Cardiac septum (tissue), 1 donor: ENCODE measurements at regions of chr3 and their contacts with region 1.

Region 1: GRCh38 chr3:184371570-184372018 is 6.4 kb downstream of the THPO start:
- DNase-seq: no peak

Region 2: GRCh38 chr3:184417619-184418327 is 46.2 kb after region 1 on chr3:
- intact Hi-C with region 1: loop called (anchors 5 kb)
- DNase-seq: peak; percentile 76

Region 3: GRCh38 chr3:184469423-184469822 is 97.8 kb after region 1 on chr3:
- intact Hi-C with region 1: loop called (anchors 5 kb)
- DNase-seq: peak; percentile 72

Region 4: DNA sequence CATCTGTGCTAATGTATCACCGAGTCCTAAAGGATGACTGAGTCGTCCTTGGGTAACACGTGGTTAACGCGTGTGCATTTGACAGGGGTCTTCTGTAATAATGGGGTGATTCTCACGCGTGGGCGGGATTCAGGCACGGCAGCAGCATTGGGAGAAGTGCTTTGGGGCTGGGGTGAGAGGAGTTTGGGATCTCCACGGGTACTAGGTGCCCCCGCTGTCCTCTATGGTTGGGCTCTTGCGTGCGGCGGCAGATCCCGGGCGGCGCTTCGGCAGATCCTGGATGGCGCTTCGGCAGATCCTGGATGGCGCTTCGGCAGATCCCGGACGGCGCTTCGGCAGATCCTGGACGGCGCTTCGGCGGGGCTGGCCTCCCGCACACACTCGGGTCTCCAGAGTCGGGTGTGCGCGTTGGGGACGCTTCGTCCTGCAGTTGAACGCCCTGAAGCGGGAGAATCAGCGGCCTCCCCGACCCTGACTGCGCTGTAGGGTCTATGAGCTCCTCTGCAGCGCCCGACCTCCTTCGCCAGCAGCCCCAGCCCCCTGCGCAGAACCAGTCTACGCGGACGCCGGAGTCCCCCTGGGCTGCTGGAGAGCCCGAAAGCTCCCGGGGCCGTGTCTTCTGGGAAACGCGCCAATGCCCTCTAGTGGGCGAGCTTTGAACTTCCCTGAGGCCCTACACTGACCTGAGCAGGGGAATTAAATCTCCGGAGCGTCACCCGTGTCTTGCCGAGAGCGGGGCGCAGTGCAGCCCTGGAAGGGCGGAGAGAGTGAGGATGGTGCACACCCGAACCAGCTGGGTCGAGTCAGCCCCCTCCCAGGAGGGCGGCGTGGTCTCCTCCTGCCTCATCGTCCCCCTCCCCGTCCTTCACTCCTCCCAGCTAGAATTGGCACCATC is 141.9 kb after region 1 on chr3:
- intact Hi-C with region 1: loop called (anchors 2 kb)
- DNase-seq: peak; percentile 90

Region 5: DNA sequence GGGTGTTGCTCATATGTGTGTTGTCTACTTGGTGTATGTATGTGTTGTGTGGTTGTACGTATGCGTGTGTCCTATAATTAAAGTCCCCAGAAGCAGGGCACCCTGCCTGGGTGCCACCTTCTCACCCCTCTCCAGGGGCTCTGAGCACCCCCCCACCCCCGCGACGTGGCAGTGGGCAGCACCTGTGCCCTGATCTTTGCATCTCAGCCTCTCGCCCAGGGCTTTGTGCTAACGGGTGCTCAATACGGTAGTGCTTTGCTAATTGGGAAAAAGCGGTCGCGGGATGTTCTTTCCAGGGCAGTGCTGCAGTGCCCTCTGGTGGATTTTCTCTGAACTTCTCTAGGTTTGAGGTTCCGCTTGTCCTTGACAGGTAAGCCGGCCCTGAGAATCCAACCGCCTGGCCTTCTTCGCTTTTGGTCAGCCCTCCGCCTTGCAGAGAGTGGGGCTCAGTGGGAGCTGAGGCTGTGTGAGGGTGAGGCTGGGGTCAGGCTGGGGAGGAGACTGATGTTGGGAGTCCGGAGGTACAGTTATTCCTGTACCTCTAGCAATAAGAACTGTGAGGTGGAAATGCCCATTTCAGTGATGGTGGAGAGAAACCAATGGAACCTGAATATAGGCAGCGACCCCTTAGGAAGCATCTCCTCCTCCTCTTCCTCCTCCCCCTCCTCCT is 172.4 kb after region 1 on chr3:
- intact Hi-C with region 1: loop called (anchors 1 kb)
- DNase-seq: peak; percentile 79

Region 6: DNA sequence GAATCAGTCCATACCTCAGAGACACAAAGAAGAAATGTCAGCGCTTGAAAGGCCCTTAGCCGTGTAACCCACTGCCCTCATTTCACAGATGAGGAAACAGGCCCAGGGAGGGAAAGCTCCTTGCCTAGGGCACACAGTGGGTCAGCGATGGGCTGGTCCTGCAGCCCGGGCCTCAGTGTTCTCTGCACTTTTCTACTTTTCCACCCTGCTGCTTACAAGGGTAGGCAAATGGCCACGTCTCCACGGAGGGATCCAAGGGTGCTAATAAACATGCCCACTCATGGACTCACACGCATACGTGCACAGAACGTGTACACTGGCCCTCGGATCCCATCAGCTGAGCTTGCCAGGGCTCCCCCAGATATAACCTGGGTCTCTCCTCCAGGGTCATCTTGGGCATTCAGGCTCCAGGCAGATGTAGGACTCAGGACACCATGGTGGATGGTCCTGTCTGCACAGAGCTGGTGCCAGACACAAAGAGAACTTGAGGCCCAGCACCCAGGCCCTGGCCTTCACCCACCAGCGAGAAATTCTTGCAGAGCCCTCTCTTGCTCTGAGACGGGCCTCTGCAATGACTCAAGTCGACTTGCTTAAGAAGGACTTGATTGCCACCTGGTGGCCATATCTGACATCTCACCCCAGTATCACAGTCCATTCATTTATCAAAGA is 405.9 kb after region 1 on chr3:
- intact Hi-C with region 1: loop called (anchors 5 kb)
- DNase-seq: peak; percentile 83